ENCODE measurements at regions of chr9 and their contacts with region 1.

Region 1: DNA sequence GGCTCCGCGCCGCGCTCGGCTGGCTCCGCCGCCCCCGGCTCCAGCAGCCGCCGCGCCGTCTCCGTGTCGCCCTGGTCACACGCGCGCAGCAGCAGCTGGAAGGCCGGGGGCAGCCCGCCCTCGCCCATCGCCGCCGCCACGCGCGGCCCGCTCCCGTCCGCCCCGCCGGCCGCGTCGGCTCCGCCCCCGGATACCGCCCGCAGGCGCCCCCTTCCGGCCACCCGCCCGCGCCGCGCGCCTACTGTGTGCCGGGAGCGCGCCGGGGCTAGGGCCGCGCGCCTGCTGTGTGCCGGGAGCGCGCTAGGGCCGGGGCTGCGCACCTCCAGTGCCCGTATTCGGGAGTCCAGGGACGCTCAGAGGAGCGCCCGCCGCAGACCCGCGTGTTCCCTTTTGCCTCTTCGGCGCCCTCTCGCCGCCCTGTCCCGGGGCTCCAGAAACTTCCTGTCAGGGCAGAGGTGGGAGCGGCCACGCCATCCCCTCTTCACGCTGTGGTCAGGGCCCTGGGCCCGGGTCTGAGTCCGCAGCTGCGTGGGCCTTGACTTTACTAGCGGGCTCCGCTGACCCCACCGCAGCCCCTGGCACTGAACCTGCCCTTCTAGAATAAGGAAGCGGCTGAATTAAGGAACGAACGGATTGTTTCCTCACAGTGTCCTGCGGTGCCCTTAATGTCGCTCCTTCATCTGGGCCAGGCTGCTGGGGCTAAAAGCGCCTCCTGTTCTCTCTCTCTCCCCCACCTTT is at the start of gene ANKS6:
- DNase-seq: peak; percentile 90
- ATAC-seq: peak; percentile 90
- H3K4me3 Mint-ChIP-seq: peak within 1 kb of the TSS; percentile 77
- H3K27ac Mint-ChIP-seq: peak within 1 kb of the TSS; percentile 81
- H3K4me1 Mint-ChIP-seq: peaks cover 25% of the 10 kb centered on the region
- H3K27me3 Mint-ChIP-seq: no peaks in the 10 kb centered on the region
- total RNA-seq, gene ANKS6: 15.8 to 17.4 TPM

Region 2: GRCh38 chr9:98056269-98057137 is 740.0 kb before region 1 on chr9 and contains the start of gene NANS:
- CTCF ChIA-PET with region 1: interaction called, 3 read pairs
- POLR2A ChIA-PET with region 1: no interaction called
- intact Hi-C with region 1: loop called in 1 of 2 experiments (anchors 5 kb)
- DNase-seq: peak; percentile 97
- ATAC-seq: peak; percentile 94
- H3K4me3 Mint-ChIP-seq: peak within 1 kb of the TSS; percentile 94
- H3K27ac Mint-ChIP-seq: peak within 1 kb of the TSS; percentile 98
- H3K4me1 Mint-ChIP-seq: peaks cover 28% of the 10 kb centered on the region
- H3K27me3 Mint-ChIP-seq: no peaks in the 10 kb centered on the region
- total RNA-seq, gene NANS: 45.9 to 47.7 TPM

Region 3: DNA sequence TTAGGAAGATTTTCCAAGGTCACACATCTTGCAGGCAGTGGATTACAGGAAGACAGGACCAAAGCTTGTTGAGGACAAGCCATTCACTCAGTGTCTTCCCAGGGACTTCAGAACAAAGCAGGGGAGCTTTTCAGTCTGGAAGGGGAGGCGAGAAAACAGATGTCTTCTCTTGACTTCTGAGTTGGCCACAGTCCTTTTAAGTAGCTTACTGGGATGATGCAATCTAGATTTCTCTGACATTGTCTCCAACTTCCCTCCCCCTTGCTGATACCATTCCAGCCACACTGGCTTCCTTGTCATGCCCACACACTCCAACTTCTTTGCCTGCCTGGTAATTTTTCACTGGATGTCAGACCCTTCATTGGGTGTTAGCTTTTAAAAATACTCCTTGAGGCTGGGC is 366.9 kb before region 1 on chr9:
- CTCF ChIA-PET with region 1: no interaction called
- POLR2A ChIA-PET with region 1: no interaction called
- intact Hi-C with region 1: no loop called
- DNase-seq: no peak
- ATAC-seq: no peak
- H3K4me3 Mint-ChIP-seq: no peak overlapping the region
- H3K27ac Mint-ChIP-seq: no peak overlapping the region
- H3K4me1 Mint-ChIP-seq: no peaks in the 10 kb centered on the region
- H3K27me3 Mint-ChIP-seq: no peaks in the 10 kb centered on the region

Region 4: GRCh38 chr9:98807070-98807810 is 10.7 kb after region 1 on chr9 and contains the start of gene GALNT12:
- CTCF ChIA-PET with region 1: interaction called, 57 read pairs
- POLR2A ChIA-PET with region 1: interaction called, 3 read pairs
- intact Hi-C with region 1: loop called in 1 of 2 experiments (anchors 1 kb)
- DNase-seq: peak; percentile 74
- ATAC-seq: peak; percentile 63
- H3K4me3 Mint-ChIP-seq: peak within 1 kb of the TSS; percentile 81
- H3K27ac Mint-ChIP-seq: peak within 1 kb of the TSS; percentile 65
- H3K4me1 Mint-ChIP-seq: peaks cover 35% of the 10 kb centered on the region
- H3K27me3 Mint-ChIP-seq: peaks cover 3% of the 10 kb centered on the region
- total RNA-seq, gene GALNT12: 10.2 to 12.7 TPM

Region 5: DNA sequence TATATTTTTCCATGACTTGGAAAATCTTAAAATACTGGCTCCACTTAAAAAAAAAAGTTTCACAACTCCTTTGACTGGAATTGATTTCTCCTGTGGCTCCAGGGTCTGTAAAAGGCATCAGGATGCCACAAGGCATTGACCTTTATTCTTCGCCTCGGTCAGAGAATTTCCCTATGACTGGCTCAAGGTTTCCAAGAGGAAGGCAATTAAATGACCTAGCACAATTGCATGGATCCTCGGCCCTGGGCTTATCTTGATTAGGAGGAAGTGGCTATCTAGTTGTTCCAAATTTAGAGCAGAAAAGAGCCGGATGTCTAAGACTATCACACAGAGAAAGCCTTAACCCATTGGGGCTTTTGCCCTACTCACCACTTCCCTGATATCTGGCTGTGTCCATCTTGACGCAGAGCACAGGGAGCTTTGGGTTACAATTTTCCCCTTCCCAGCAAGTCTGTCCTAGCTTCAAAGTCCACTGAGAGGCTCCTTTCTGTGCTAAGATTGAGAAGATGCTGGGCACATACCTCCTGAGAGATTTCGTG is 90.2 kb after region 1 on chr9:
- CTCF ChIA-PET with region 1: no interaction called
- POLR2A ChIA-PET with region 1: no interaction called
- intact Hi-C with region 1: no loop called
- DNase-seq: no peak
- ATAC-seq: no peak
- H3K4me3 Mint-ChIP-seq: no peak overlapping the region
- H3K27ac Mint-ChIP-seq: no peak overlapping the region
- H3K4me1 Mint-ChIP-seq: no peaks in the 10 kb centered on the region
- H3K27me3 Mint-ChIP-seq: peaks cover 21% of the 10 kb centered on the region

Region 6: DNA sequence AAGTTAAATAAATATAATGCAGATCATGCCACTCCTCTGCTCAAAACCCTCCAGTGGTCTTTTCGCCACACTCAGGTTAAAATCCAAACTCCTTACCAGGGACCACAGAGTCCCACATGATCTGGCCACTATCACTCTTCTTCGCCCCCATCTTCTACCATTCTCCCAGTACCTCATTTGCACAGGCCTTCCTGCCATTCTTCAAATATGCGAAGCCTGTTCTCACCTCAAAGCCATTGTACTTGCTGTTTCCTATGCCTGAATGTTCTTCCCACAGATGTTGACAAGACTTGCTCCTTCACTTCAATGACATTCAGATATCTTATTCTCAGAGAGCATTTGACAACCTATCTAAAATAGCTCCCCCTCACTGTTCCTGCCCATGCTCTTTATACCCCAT is 1545.4 kb after region 1 on chr9:
- CTCF ChIA-PET with region 1: no interaction called
- POLR2A ChIA-PET with region 1: no interaction called
- intact Hi-C with region 1: no loop called
- DNase-seq: no peak
- ATAC-seq: no peak
- H3K4me3 Mint-ChIP-seq: no peak overlapping the region
- H3K27ac Mint-ChIP-seq: no peak overlapping the region
- H3K4me1 Mint-ChIP-seq: peaks cover 24% of the 10 kb centered on the region
- H3K27me3 Mint-ChIP-seq: no peaks in the 10 kb centered on the region

Region 7: DNA sequence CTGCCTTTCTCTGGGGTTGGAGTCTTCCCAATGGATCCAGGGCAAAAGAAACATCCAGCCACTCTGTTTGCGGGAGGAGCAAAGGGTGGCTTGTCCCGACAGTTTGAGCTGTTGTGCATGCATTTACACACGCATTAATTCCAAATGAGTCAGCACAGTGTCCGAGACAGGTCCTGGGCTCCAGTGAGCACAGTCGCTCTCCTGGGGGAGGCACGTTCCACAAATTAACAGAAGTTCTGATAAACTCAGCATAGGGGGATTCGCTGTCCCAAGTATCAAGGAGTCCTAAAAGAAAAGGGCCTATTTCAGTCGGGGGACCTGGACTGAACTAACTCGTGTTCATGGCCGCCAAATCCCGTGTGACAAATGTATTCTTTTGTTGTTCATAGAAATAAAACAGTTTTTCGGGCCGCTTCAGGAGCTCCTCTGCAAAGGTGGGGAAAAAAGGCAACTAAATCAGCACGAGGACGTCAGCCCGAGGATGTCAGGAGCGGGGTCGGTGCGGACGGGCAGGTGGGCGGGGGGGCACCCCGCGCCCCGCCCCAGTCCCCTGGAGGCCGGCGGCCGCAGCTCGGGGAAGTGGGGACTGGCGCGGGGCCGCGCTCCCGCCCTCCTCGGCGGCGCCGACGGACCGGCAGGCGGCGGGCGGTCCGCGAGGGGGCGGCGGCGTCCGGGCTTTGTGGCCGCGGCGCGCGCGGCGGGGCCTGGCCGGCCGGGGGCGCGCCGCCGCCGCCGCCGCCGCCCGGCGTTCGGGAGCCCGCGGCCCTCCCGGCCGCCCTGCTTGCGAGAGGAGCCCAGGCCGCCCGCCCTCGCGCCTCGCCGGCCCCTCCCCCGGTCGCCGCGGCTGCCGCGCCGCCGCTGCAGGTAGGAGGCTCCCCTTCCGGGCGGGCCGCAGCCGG is 1630.2 kb after region 1 on chr9 and contains the start of gene MSANTD3:
- CTCF ChIA-PET with region 1: no interaction called
- POLR2A ChIA-PET with region 1: no interaction called
- intact Hi-C with region 1: loop called in 1 of 2 experiments (anchors 5 kb)
- DNase-seq: peak; percentile 71
- ATAC-seq: peak; percentile 74
- H3K4me3 Mint-ChIP-seq: peak within 1 kb of the TSS; percentile 81
- H3K27ac Mint-ChIP-seq: peak within 1 kb of the TSS; percentile 91
- H3K4me1 Mint-ChIP-seq: peaks cover 30% of the 10 kb centered on the region
- H3K27me3 Mint-ChIP-seq: no peaks in the 10 kb centered on the region
- total RNA-seq, gene MSANTD3: 17.9 to 21.6 TPM

Measured in activated CD4-positive, alpha-beta T cell treated with anti-CD3 and anti-CD28 coated beads for 36 hours (primary cell).